GM12878 (cell line): ENCODE measurements at regions of chr3 and their contacts with region 1.

Region 1: DNA sequence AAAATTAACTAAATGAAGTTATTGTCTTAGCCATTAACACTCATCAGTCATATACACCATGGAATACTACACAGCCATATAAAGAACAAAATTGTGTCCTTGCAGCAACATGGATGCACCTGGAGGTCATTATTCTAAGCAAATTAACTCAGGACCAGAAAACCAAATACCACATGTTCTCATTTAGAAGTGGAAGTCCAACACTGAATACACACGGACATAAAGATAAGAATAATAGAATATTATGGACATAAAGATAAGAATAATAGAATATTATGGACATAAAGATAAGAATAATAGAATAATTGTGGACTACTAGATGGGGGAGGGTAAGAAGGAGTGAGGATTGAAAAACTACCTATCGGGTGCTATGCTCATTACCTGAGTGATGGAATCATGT is 122.3 kb downstream of the CHL1 start:
- DNase-seq: no peak
- ATAC-seq: no peak
- H3K4me3 ChIP-seq: no peak overlapping the region
- H3K27ac ChIP-seq: no peak overlapping the region
- H3K4me1 ChIP-seq: no peaks in the 10 kb centered on the region
- H3K27me3 ChIP-seq: no peaks in the 10 kb centered on the region
- CTCF ChIP-seq: no peak
- EP300 ChIP-seq: no peak
- POLR2A ChIP-seq: no peak
- RAD21 ChIP-seq: no peak

Region 2: GRCh38 chr3:331881-332280 is 13.0 kb after region 1 on chr3:
- CTCF ChIA-PET with region 1: no interaction called
- POLR2A ChIA-PET with region 1: interaction called, 3 read pairs
- RAD21 ChIA-PET with region 1: interaction called, 3 read pairs
- SMC1A ChIA-PET with region 1: interaction called, 6 read pairs
- in situ Hi-C with region 1: no loop called
- intact Hi-C with region 1: loop called (anchors 1 kb)
- DNase-seq: no peak
- ATAC-seq: no peak
- H3K4me3 ChIP-seq: no peak overlapping the region
- H3K27ac ChIP-seq: no peak overlapping the region
- H3K4me1 ChIP-seq: no peaks in the 10 kb centered on the region
- H3K27me3 ChIP-seq: no peaks in the 10 kb centered on the region; a peak in 1 of 4 replicates
- CTCF ChIP-seq: no peak
- EP300 ChIP-seq: no peak
- POLR2A ChIP-seq: no peak
- RAD21 ChIP-seq: no peak

Region 3: DNA sequence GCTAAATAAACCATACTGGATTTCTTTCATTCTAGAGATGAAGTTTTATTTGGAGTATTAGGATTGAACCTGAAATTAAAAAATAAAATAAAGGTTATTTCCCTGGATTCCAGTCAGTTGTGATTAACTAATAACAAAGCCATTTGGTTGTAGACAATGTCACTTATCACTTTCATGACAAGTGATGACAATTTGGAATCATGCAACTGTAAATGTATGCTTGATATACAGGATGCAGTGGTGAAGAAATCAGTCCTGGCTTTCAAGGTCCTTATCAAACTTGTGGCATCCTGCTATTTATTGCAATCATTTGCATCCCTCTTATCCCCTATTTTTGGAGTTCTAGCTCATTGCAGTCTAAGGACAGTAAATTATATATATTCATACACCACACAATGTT is 302.8 kb after region 1 on chr3:
- CTCF ChIA-PET with region 1: no interaction called
- POLR2A ChIA-PET with region 1: no interaction called
- RAD21 ChIA-PET with region 1: no interaction called
- SMC1A ChIA-PET with region 1: no interaction called
- in situ Hi-C with region 1: no loop called
- intact Hi-C with region 1: no loop called
- DNase-seq: no peak
- ATAC-seq: no peak
- H3K4me3 ChIP-seq: no peak overlapping the region
- H3K27ac ChIP-seq: no peak overlapping the region
- H3K4me1 ChIP-seq: no peaks in the 10 kb centered on the region
- H3K27me3 ChIP-seq: no peaks in the 10 kb centered on the region
- CTCF ChIP-seq: no peak
- EP300 ChIP-seq: no peak
- POLR2A ChIP-seq: no peak
- RAD21 ChIP-seq: no peak